CD8-positive, alpha-beta T cell (primary cell): ENCODE measurements at regions of chr1 and their contacts with region 1.

Region 1: GRCh38 chr1:158124999-158125398 is 55.7 kb upstream of the CD1D start:
- DNase-seq: peak; percentile 44 to 83 (median 67)
- ATAC-seq: peak; percentile 94
- H3K4me3 ChIP-seq: no peak overlapping the region
- H3K4me3 Mint-ChIP-seq: no peak overlapping the region
- H3K27ac ChIP-seq: no peak overlapping the region
- H3K27ac Mint-ChIP-seq: no peak overlapping the region
- H3K4me1 ChIP-seq: no peaks in the 10 kb centered on the region
- H3K4me1 Mint-ChIP-seq: no peaks in the 10 kb centered on the region
- H3K27me3 ChIP-seq: no peaks in the 10 kb centered on the region
- H3K27me3 Mint-ChIP-seq: peaks cover 33% of the 10 kb centered on the region
- CTCF ChIP-seq: peak; percentile 79

Region 2: GRCh38 chr1:157163273-157164127 is 961.5 kb before region 1 on chr1:
- CTCF ChIA-PET with region 1: interaction called, 3 read pairs
- POLR2A ChIA-PET with region 1: no interaction called
- intact Hi-C with region 1: loop called (anchors 2 to 10 kb)
- DNase-seq: peak; percentile 57 to 83 (median 70)
- ATAC-seq: peak; percentile 76
- H3K4me3 ChIP-seq: no peak overlapping the region
- H3K4me3 Mint-ChIP-seq: no peak overlapping the region
- H3K27ac ChIP-seq: no peak overlapping the region
- H3K27ac Mint-ChIP-seq: no peak overlapping the region
- H3K4me1 ChIP-seq: no peaks in the 10 kb centered on the region
- H3K4me1 Mint-ChIP-seq: no peaks in the 10 kb centered on the region
- H3K27me3 ChIP-seq: peaks cover 3 to 7% of the 10 kb centered on the region in 2 experiments
- H3K27me3 Mint-ChIP-seq: peaks cover 6% of the 10 kb centered on the region
- CTCF ChIP-seq: peak; percentile 97

Region 3: GRCh38 chr1:157369808-157370521 is 755.0 kb before region 1 on chr1:
- CTCF ChIA-PET with region 1: no interaction called
- POLR2A ChIA-PET with region 1: no interaction called
- intact Hi-C with region 1: loop called (anchors 1 to 5 kb)
- DNase-seq: peak in 7 of 9 experiments; percentile 3 to 60 (median 35)
- ATAC-seq: no peak
- H3K4me3 ChIP-seq: no peak overlapping the region
- H3K4me3 Mint-ChIP-seq: no peak overlapping the region
- H3K27ac ChIP-seq: no peak overlapping the region
- H3K27ac Mint-ChIP-seq: no peak overlapping the region
- H3K4me1 ChIP-seq: no peaks in the 10 kb centered on the region
- H3K4me1 Mint-ChIP-seq: no peaks in the 10 kb centered on the region
- H3K27me3 ChIP-seq: no peaks in the 10 kb centered on the region
- H3K27me3 Mint-ChIP-seq: peaks cover 8% of the 10 kb centered on the region
- CTCF ChIP-seq: peak; percentile 83

Region 4: GRCh38 chr1:157963713-157964112 is 161.3 kb before region 1 on chr1:
- CTCF ChIA-PET with region 1: interaction called, 33 read pairs
- POLR2A ChIA-PET with region 1: no interaction called
- intact Hi-C with region 1: loop called (anchors 1 kb)
- DNase-seq: peak; percentile 2 to 69 (median 44)
- ATAC-seq: peak; percentile 40
- H3K4me3 ChIP-seq: no peak overlapping the region
- H3K4me3 Mint-ChIP-seq: no peak overlapping the region
- H3K27ac ChIP-seq: no peak overlapping the region
- H3K27ac Mint-ChIP-seq: no peak overlapping the region
- H3K4me1 ChIP-seq: no peaks in the 10 kb centered on the region
- H3K4me1 Mint-ChIP-seq: no peaks in the 10 kb centered on the region
- H3K27me3 ChIP-seq: peaks cover 2% of the 10 kb centered on the region in 2 experiments
- H3K27me3 Mint-ChIP-seq: peaks cover 27% of the 10 kb centered on the region
- CTCF ChIP-seq: peak; percentile 68

Region 5: DNA sequence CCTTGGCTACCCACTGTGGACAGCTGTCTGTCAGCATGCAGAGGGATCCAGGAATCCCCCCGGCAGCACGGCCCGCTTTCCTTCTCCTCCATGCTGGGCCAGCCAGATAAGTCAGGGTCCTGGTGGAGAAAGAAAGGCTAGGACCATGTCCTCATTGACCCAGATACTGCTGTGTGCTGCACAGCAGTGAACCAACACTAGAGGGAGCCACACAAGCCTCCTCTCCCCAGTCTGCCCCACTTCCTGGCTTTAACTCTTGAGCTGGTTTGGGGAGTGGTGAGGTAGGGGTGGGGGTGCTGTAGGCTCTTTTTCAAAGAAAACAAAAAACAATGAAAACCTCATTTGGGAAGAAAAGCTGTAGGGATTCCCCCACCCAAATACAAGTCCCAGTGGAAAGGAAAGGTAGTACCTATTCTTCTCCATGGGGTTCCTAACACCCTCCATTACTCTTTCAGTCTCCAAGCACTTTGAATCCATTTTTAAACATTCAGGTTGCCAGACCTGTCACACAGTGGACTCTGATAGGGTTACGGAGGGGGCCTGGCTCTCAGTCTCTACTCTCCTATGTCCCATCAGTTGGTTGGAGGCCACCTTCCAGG is 29.2 kb before region 1 on chr1:
- CTCF ChIA-PET with region 1: interaction called, 59 read pairs
- POLR2A ChIA-PET with region 1: no interaction called
- intact Hi-C with region 1: loop called (anchors 1 to 2 kb)
- DNase-seq: peak in 4 of 9 experiments; percentile 10 to 52 (median 33)
- ATAC-seq: peak; percentile 55
- H3K4me3 ChIP-seq: no peak overlapping the region
- H3K4me3 Mint-ChIP-seq: no peak overlapping the region
- H3K27ac ChIP-seq: no peak overlapping the region
- H3K27ac Mint-ChIP-seq: no peak overlapping the region
- H3K4me1 ChIP-seq: no peaks in the 10 kb centered on the region
- H3K4me1 Mint-ChIP-seq: no peaks in the 10 kb centered on the region
- H3K27me3 ChIP-seq: no peaks in the 10 kb centered on the region
- H3K27me3 Mint-ChIP-seq: no peaks in the 10 kb centered on the region
- CTCF ChIP-seq: peak; percentile 22